Activated CD8-positive, alpha-beta T cell treated with anti-CD3 and anti-CD28 coated beads, Interleukin-2, amount 10 ng/mL, durations not matched to agents 7 days and 5 days (primary cell): ENCODE measurements at regions of chr5 and their contacts with region 1.

Region 1: DNA sequence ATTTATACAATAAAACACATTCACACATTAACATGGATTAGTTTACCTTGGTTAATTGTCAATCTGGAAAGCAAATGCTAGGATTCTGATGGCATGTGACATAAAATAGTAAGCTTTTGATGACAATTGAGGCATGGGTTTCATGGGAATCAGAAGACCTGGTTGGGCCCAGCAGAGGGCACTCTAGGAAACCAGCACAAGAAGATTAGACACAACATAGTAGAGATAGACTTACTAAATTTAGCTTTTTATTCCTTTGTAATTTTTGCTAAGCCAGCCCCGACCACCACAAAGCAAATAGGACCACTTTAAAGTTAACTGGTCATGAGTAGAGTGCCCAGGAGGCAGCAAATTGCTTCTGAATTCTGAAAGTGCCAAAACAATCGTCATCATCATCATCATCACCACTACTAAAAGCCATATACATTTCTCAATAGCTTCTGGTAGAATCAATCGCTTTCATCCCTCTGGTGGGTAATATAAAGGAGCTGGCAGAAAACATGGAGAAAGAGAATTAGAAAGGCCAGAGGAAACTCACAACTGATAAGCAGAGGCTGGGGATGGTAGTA is 163.2 kb downstream of the ARRDC3 start:
- DNase-seq: peak; percentile 39
- ATAC-seq: no peak
- H3K4me3 Mint-ChIP-seq: no peak overlapping the region
- H3K27ac Mint-ChIP-seq: no peak overlapping the region
- H3K4me1 Mint-ChIP-seq: peaks cover 3% of the 10 kb centered on the region
- H3K27me3 Mint-ChIP-seq: peaks cover 1% of the 10 kb centered on the region

Region 2: GRCh38 chr5:90983148-90983547 is 236.7 kb before region 1 on chr5:
- CTCF ChIA-PET with region 1: no interaction called
- POLR2A ChIA-PET with region 1: no interaction called
- DNase-seq: no peak
- ATAC-seq: no peak
- H3K4me3 Mint-ChIP-seq: no peak overlapping the region
- H3K27ac Mint-ChIP-seq: no peak overlapping the region
- H3K4me1 Mint-ChIP-seq: no peaks in the 10 kb centered on the region
- H3K27me3 Mint-ChIP-seq: no peaks in the 10 kb centered on the region

Region 3: GRCh38 chr5:91293131-91293530 is 73.2 kb after region 1 on chr5:
- CTCF ChIA-PET with region 1: no interaction called
- POLR2A ChIA-PET with region 1: no interaction called
- DNase-seq: peak; percentile 66
- ATAC-seq: peak; percentile 81
- H3K4me3 Mint-ChIP-seq: peak overlapping the region; percentile 5
- H3K27ac Mint-ChIP-seq: peak overlapping the region; percentile 43
- H3K4me1 Mint-ChIP-seq: peaks cover 22% of the 10 kb centered on the region
- H3K27me3 Mint-ChIP-seq: no peaks in the 10 kb centered on the region

Region 4: GRCh38 chr5:91373016-91373415 is 153.1 kb after region 1 on chr5:
- CTCF ChIA-PET with region 1: interaction called, 13 read pairs
- POLR2A ChIA-PET with region 1: no interaction called
- DNase-seq: no peak
- ATAC-seq: no peak
- H3K4me3 Mint-ChIP-seq: no peak overlapping the region
- H3K27ac Mint-ChIP-seq: no peak overlapping the region
- H3K4me1 Mint-ChIP-seq: peaks cover 34% of the 10 kb centered on the region
- H3K27me3 Mint-ChIP-seq: no peaks in the 10 kb centered on the region